ENCODE measurements at regions of chr5 and their contacts with region 1.

Region 1: GRCh38 chr5:41856644-41857491 is 13.4 kb downstream of the OXCT1 start:
- DNase-seq: peak; percentile 74 to 88 (median 78)
- H3K4me3 ChIP-seq: no peak overlapping the region
- H3K27ac ChIP-seq: no peak overlapping the region
- H3K4me1 ChIP-seq: no peaks in the 10 kb centered on the region
- H3K27me3 ChIP-seq: no peaks in the 10 kb centered on the region

Region 2: DNA sequence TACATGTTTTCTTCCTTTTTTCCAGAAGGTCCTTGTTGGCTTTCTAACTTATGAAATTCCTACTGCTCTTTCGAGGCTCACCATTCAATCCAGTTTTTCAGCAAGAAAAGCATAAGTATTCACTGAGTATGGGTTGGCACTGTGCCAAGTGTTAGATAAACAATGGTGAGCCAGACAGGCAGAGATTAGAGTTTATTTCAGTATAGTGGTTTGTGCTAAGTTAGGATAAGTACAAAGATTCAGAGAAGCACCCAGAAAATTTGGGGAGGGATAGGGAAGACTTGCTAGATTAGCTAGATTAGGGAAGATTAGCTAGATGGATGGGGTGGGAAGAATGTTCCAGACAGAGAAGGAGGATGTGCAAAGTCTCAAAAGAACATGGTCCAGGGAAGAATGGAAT is 109.6 kb before region 1 on chr5:
- CTCF ChIA-PET with region 1: no interaction called
- POLR2A ChIA-PET with region 1: no interaction called
- DNase-seq: peak in 2 of 3 donors; percentile 12 to 15
- H3K4me3 ChIP-seq: no peak overlapping the region
- H3K27ac ChIP-seq: no peak overlapping the region
- H3K4me1 ChIP-seq: no peaks in the 10 kb centered on the region
- H3K27me3 ChIP-seq: no peaks in the 10 kb centered on the region

Region 3: GRCh38 chr5:41869739-41870626 is 13.1 kb after region 1 on chr5 and contains the start of gene OXCT1:
- CTCF ChIA-PET with region 1: interaction called, 33 read pairs
- POLR2A ChIA-PET with region 1: no interaction called
- DNase-seq: peak; percentile 89 to 96 (median 95)
- H3K4me3 ChIP-seq: peak within 1 kb of the TSS; percentile 79 to 96 (median 91)
- H3K27ac ChIP-seq: peak within 1 kb of the TSS; percentile 28 to 87
- H3K4me1 ChIP-seq: peaks cover 7 to 17% (median 13%) of the 10 kb centered on the region in 4 experiments
- H3K27me3 ChIP-seq: no peaks in the 10 kb centered on the region

Region 4: GRCh38 chr5:41924872-41925554 is 68.1 kb after region 1 on chr5 and contains the start of gene FBXO4:
- CTCF ChIA-PET with region 1: interaction called, 22 read pairs
- POLR2A ChIA-PET with region 1: no interaction called
- DNase-seq: peak; percentile 96 to 99 (median 99)
- H3K4me3 ChIP-seq: peak within 1 kb of the TSS; percentile 72 to 90 (median 84)
- H3K27ac ChIP-seq: peak within 1 kb of the TSS; percentile 88 to 92
- H3K4me1 ChIP-seq: peaks cover 0 to 25% (median 15%) of the 10 kb centered on the region in 4 experiments
- H3K27me3 ChIP-seq: no peaks in the 10 kb centered on the region

Region 5: GRCh38 chr5:41940641-41941040 is 83.8 kb after region 1 on chr5:
- CTCF ChIA-PET with region 1: no interaction called
- POLR2A ChIA-PET with region 1: no interaction called
- DNase-seq: no peak
- H3K4me3 ChIP-seq: no peak overlapping the region
- H3K27ac ChIP-seq: no peak overlapping the region
- H3K4me1 ChIP-seq: no peaks in the 10 kb centered on the region
- H3K27me3 ChIP-seq: no peaks in the 10 kb centered on the region

Region 6: GRCh38 chr5:42057254-42057690 is 200.4 kb after region 1 on chr5:
- CTCF ChIA-PET with region 1: interaction called, 62 read pairs
- POLR2A ChIA-PET with region 1: no interaction called
- DNase-seq: peak; percentile 47 to 71 (median 58)
- H3K4me3 ChIP-seq: no peak overlapping the region
- H3K27ac ChIP-seq: no peak overlapping the region
- H3K4me1 ChIP-seq: no peaks in the 10 kb centered on the region
- H3K27me3 ChIP-seq: no peaks in the 10 kb centered on the region

Measured in common myeloid progenitor, CD34-positive (primary cell).